Motor neuron (in vitro differentiated cells): ENCODE measurements at regions of chr16 and their contacts with region 1.

Region 1: DNA sequence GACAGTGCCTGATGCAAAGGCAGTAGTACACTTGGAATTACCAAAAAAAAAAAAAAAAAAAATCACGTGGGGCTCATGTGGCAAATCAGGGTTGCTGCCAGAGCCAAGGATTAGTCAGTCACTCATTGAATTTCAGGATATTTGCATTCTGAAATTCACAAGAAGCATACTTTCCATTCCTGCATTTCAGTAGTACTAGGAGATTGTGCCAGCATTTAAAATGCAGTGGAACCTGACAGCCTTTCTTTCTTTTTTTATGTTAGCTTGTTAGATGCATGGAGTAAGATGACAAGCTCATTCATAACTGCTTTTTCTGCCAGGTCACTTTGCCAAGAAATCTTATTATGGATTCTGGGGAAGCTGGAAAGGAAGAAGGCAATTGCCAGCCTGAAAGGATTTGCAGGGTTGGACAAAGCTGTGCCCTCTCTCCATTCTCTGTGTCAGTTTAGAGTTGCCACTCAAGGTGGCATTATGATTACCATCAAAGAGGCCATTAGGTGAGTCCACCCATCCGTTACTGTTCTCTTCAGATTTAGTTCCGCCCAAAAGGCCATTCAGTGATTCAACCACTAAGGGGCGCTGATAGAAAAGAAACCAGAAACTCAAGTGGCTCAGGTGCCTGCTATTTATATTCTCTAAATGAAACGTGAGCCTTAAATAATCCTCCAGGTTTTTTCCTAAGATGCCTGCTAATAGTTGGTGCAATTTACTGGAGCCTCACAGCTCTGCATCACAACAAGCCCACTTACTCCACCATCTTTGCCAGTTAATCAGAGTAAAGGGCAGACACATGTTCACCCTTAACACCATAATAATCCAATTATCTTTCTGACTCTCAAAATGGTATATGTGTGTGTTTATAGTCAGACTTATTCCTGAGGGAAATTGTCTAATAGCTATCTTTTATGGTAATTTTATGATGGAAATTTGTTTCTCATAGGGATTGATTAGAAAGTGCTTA is 59.0 kb downstream of the TANGO6 start:
- ATAC-seq: peak; percentile 74 to 98 (median 86)
- H3K4me3 ChIP-seq: no peak overlapping the region
- H3K27ac ChIP-seq: no peak overlapping the region
- H3K4me1 ChIP-seq: peaks cover 0 to 10% of the 10 kb centered on the region in 2 donors

Region 2: GRCh38 chr16:68719993-68720489 is 182.2 kb before region 1 on chr16:
- in situ Hi-C with region 1: no loop called
- ATAC-seq: no peak
- H3K4me3 ChIP-seq: no peak overlapping the region
- H3K27ac ChIP-seq: no peak overlapping the region
- H3K4me1 ChIP-seq: no peaks in the 10 kb centered on the region

Region 3: DNA sequence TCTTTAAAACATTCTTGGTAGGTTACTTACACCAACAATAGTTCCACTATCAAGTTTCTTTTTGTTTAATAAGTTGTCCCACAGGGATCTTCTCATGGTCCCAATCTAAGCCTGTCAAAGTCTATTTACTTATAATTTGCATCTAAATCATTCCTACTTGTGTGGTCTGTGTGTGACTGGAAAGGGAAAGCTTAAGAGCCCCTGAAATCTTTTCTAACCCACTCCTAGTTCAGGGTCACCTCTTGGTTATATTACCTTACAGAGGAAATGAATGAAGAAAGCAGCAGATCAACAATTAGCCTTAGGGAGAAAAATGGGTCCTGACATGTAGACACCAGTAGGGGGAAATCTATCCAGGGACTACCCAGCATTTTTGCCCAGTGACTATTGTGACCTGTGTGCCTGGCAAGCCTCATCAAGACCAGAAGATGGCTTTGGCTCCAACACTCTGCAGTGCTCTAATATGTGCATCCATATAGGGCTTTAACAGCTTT is 92.8 kb after region 1 on chr16:
- in situ Hi-C with region 1: no loop called
- ATAC-seq: peak in 4 of 8 experiments; percentile 48 to 70 (median 58)
- H3K4me3 ChIP-seq: no peak overlapping the region
- H3K27ac ChIP-seq: no peak overlapping the region
- H3K4me1 ChIP-seq: no peaks in the 10 kb centered on the region

Region 4: DNA sequence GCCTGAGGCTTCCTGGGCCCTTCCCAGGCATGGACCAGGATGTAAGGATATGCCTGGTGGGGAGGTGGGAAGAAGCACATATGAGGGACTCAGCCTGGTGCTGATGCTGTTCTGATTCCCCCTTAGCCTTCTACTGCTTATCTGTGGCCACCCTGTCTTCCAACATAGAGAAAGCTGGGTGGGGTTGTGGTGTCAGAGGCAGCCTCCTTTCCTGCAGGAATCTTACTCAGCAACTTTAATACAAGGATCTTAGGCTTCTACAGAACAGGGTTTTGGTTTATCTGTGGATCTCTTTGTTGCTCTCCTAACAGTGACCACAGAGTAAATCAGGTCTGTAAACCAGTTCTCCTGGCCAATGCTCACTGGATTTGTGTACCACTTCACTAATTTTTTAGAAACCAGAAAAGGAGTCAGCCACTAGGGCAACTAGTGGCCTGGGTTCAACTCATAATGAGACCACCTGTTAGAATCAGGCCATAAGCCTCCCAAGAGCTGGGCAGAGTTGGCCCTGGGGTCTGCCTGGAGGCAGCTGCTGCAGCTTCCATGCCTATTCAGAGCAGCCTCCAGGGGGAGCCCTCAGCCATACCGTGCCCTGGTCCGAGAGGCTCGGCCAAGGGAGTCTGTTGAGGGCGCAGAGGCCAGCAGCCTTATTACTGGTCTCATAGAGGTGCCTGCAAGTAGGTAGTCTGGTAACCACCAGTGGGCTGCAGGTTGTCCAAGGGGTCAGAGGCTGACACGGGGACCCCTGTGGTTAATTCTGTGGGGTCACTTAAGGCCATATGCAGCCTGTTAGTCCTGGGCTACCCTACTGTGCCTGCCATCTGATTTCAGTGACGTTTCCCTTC is 210.2 kb after region 1 on chr16:
- in situ Hi-C with region 1: loop called in 4 of 9 experiments (anchors 10 to 25 kb)
- ATAC-seq: peak; percentile 52 to 75 (median 61)
- H3K4me3 ChIP-seq: no peak overlapping the region
- H3K27ac ChIP-seq: no peak overlapping the region
- H3K4me1 ChIP-seq: peaks cover 11 to 13% of the 10 kb centered on the region in 2 donors